Right ventricle myocardium inferior (tissue), 1 donor: ENCODE measurements at regions of chr20 and their contacts with region 1.

Region 1: GRCh38 chr20:57703013-57703412 is 6.8 kb downstream of the PMEPA1 start:
- DNase-seq: no peak
- ATAC-seq: no peak

Region 2: DNA sequence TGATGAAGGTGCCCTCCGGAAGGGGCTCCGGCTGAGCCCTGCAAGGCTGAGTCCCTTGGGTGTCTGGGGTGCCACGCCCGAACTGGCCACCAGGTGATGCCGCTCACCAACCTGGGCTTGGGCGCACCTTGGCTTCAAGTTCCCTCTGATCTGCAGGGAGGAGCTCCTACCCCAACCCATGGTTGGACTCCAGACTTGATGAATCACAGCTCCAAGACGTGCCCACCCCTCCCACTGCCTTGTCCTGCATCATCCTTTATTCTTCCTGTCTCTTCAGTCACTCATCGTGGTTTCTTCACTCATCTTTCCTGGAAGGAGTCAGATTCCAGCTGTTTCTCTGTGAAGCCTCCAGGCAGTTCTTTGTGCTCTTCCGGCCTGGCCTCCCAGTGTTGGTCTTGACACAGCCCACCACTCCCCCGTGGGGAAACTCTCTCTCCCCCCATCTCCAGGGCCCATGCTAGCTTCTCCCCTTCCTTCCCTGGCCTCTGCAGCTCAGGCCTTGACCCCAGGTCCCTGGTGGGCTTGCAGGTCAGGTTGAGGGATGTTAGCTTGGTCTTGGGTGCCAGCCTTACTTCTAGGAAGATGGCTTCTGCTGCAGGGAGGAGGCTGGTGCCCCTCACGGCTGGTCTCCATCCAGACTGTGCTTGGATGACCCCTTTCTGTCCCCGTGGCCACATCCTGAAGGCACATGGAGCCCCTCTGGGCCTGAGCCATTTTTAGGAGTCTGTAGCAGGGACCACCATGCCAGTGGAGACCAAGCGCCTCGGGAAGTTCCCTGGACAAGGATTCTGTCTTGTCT is 80.2 kb before region 1 on chr20:
- intact Hi-C with region 1: no loop called
- DNase-seq: peak; percentile 78
- ATAC-seq: peak; percentile 59

Region 3: GRCh38 chr20:57688864-57689263 is 14.1 kb before region 1 on chr20:
- intact Hi-C with region 1: loop called (anchors 2 kb)
- DNase-seq: peak; percentile 81
- ATAC-seq: peak; percentile 33